Endothelial cell of umbilical vein (primary cell): ENCODE measurements at regions of chr2 and their contacts with region 1.

Region 1: DNA sequence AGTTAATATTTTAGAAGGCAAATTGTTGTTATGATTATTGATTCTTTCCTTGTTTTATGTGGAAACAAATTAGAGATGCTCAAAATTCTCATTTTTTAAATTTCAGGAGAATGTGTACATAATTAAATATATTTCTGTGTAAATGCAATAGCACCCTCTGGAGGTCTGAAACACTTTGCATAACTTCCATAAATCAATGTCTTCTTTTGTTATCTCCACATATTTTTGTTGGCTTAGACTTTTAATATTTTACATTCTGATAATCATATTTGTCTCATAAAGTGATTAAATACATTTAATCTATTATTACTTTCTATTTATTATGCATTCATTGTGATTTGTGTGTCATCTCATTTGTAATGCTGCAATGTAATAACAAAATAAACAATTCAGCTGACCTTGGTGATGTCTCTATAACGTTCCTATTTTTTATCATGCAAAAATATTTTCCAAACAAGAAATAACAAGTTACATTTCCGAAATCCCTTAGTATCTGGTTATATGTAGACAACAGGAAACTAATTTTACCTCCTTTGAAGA is 201.8 kb upstream of the GALNT5 start:
- DNase-seq: peak; percentile 61
- H3K4me3 ChIP-seq: peak overlapping the region in 1 of 3 experiments; percentile 40
- H3K27ac ChIP-seq: peak overlapping the region; percentile 66
- H3K4me1 ChIP-seq: peaks cover 35% of the 10 kb centered on the region
- H3K27me3 ChIP-seq: peaks cover 0 to 1% of the 10 kb centered on the region in 2 experiments
- CTCF ChIP-seq: peak; percentile 26 to 29
- POLR2A ChIP-seq: no peak

Region 2: DNA sequence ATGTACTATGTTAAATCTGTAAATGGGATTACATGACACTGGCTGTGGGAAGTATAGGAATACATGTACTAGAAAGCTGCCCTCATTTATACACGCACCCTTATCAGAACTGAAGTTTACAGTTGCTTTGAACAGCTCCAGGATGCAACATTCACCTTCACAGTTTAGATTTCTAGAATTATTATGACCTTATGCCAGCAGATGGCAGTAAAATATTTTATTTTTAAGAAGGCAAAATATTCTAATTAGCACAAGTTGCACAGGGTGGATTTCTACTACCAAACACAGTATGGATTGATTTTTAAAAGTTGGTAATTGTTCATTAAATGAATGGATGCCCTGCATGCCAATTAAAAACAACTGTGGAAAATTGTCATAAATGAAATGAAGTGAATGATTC is 1686.8 kb before region 1 on chr2:
- CTCF ChIA-PET with region 1: interaction called, 11 read pairs
- POLR2A ChIA-PET with region 1: no interaction called
- dilution Hi-C with region 1: no loop called
- intact Hi-C with region 1: no loop called
- DNase-seq: peak; percentile 24
- H3K4me3 ChIP-seq: no peak overlapping the region
- H3K27ac ChIP-seq: no peak overlapping the region
- H3K4me1 ChIP-seq: no peaks in the 10 kb centered on the region
- H3K27me3 ChIP-seq: no peaks in the 10 kb centered on the region
- CTCF ChIP-seq: no peak
- POLR2A ChIP-seq: no peak

Region 3: DNA sequence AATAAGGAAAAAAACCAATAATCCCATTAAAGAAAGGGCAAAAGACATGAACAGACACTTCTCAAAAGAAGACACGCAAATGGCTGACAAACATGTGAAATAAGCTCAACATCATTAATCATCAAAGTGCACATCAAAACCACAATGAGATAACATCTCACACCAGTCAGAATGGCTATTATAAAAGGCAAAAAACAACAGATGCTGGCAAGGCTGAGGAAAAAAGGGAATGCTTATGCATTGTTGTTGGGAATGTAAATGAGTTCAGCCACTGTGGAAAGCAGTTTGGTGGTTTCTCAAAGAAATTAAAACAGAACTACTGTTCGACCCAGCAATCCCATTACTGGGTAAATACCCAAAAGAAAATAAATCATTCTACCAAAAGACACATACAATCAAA is 1008.8 kb before region 1 on chr2:
- CTCF ChIA-PET with region 1: no interaction called
- POLR2A ChIA-PET with region 1: no interaction called
- dilution Hi-C with region 1: no loop called
- intact Hi-C with region 1: no loop called
- DNase-seq: no peak
- H3K4me3 ChIP-seq: no peak overlapping the region
- H3K27ac ChIP-seq: no peak overlapping the region
- H3K4me1 ChIP-seq: no peaks in the 10 kb centered on the region
- H3K27me3 ChIP-seq: no peaks in the 10 kb centered on the region
- CTCF ChIP-seq: no peak
- POLR2A ChIP-seq: no peak

Region 4: GRCh38 chr2:156341452-156342253 is 714.1 kb before region 1 on chr2:
- CTCF ChIA-PET with region 1: no interaction called
- POLR2A ChIA-PET with region 1: no interaction called
- dilution Hi-C with region 1: no loop called
- intact Hi-C with region 1: loop called (anchors 1 kb)
- DNase-seq: peak; percentile 83
- H3K4me3 ChIP-seq: peak overlapping the region; percentile 69 to 97 (median 87)
- H3K27ac ChIP-seq: peak overlapping the region; percentile 100
- H3K4me1 ChIP-seq: peaks cover 11% of the 10 kb centered on the region
- H3K27me3 ChIP-seq: no peaks in the 10 kb centered on the region
- CTCF ChIP-seq: no peak
- POLR2A ChIP-seq: peak; percentile 35

Region 5: GRCh38 chr2:156589381-156590079 is 466.2 kb before region 1 on chr2:
- CTCF ChIA-PET with region 1: interaction called, 10 read pairs
- POLR2A ChIA-PET with region 1: no interaction called
- dilution Hi-C with region 1: no loop called
- intact Hi-C with region 1: loop called (anchors 2 kb)
- DNase-seq: peak; percentile 60
- H3K4me3 ChIP-seq: no peak overlapping the region
- H3K27ac ChIP-seq: no peak overlapping the region
- H3K4me1 ChIP-seq: no peaks in the 10 kb centered on the region
- H3K27me3 ChIP-seq: no peaks in the 10 kb centered on the region
- CTCF ChIP-seq: peak; percentile 19 to 40
- POLR2A ChIP-seq: no peak

Region 6: DNA sequence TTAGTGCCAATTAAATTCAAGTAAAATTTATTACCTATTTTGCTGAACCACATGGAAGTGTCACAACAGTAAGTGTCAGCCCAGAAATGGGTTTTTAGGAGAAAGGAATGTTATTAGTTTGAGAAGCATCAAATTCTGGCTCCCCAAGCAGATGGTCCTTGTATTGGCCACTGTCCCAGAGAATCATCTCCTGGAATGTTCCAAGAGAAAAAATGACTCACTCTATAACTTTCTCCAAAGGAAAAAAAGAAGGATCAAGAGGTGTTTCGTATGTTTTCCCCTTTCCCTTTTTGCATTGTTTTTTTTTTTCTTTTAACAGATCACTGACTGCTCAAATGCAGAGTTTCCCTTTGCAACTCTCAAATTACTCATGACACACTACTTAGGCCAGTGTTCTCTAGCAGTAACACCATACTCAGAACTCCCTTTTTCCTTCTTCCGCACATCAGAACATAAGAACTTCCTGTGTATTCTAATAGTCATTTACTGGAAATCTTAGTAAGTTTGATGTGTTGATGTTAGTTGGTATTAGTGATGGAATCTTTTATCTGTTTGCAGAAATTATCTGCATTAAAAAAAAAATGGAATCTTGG is 229.3 kb before region 1 on chr2:
- CTCF ChIA-PET with region 1: no interaction called
- POLR2A ChIA-PET with region 1: no interaction called
- dilution Hi-C with region 1: no loop called
- intact Hi-C with region 1: no loop called
- DNase-seq: no peak
- H3K4me3 ChIP-seq: no peak overlapping the region
- H3K27ac ChIP-seq: no peak overlapping the region
- H3K4me1 ChIP-seq: no peaks in the 10 kb centered on the region
- H3K27me3 ChIP-seq: no peaks in the 10 kb centered on the region
- CTCF ChIP-seq: no peak
- POLR2A ChIP-seq: no peak

Region 7: DNA sequence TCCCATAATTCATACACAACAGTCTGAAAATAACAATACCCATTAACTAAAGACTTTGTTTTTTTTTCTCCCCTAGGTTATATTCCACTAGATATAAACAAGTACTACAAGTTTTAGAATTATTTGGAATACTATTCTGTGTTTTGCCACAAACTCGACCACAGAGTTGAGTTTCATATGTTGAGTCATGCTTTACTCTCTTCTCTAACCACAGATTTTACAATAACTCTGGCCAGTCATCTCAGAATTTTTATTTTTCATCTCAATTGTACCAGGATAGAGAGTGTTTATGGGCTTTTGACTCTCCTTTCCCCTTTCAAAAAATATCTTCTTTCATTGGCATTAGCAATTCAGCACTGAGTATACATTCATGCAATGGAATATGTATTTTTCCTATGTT is 146.9 kb before region 1 on chr2:
- CTCF ChIA-PET with region 1: no interaction called
- POLR2A ChIA-PET with region 1: no interaction called
- dilution Hi-C with region 1: no loop called
- intact Hi-C with region 1: loop called (anchors 5 kb)
- DNase-seq: no peak
- H3K4me3 ChIP-seq: no peak overlapping the region
- H3K27ac ChIP-seq: no peak overlapping the region
- H3K4me1 ChIP-seq: peaks cover 5% of the 10 kb centered on the region
- H3K27me3 ChIP-seq: no peaks in the 10 kb centered on the region
- CTCF ChIP-seq: no peak
- POLR2A ChIP-seq: no peak

Region 8: DNA sequence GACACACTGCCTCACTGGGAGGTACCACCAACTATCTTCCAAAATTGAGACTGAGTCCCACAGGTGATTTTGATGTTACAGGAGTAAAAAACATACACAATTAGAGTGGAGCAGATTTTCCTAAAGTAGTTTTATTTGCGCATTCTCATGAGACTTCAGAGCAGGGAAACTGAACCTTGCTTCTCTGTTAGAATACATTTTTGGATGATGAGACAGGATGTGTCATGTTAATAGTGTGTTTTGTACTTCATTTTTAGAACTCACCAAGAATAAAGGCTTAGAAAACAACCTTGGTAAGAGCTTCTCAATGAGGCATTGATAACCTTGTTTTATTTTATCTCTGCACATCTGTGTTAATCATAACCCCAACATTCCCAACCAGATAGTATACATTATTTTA is 108.5 kb before region 1 on chr2:
- CTCF ChIA-PET with region 1: no interaction called
- POLR2A ChIA-PET with region 1: no interaction called
- dilution Hi-C with region 1: no loop called
- intact Hi-C with region 1: no loop called
- DNase-seq: no peak
- H3K4me3 ChIP-seq: no peak overlapping the region
- H3K27ac ChIP-seq: no peak overlapping the region
- H3K4me1 ChIP-seq: no peaks in the 10 kb centered on the region
- H3K27me3 ChIP-seq: no peaks in the 10 kb centered on the region
- CTCF ChIP-seq: no peak
- POLR2A ChIP-seq: no peak

Region 9: GRCh38 chr2:157173740-157174184 is 118.0 kb after region 1 on chr2:
- CTCF ChIA-PET with region 1: interaction called, 8 read pairs
- POLR2A ChIA-PET with region 1: no interaction called
- dilution Hi-C with region 1: no loop called
- intact Hi-C with region 1: loop called (anchors 2 kb)
- DNase-seq: peak; percentile 93
- H3K4me3 ChIP-seq: no peak overlapping the region
- H3K27ac ChIP-seq: peak overlapping the region; percentile 78
- H3K4me1 ChIP-seq: peaks cover 18% of the 10 kb centered on the region
- H3K27me3 ChIP-seq: no peaks in the 10 kb centered on the region
- CTCF ChIP-seq: no peak
- POLR2A ChIP-seq: no peak

Region 10: GRCh38 chr2:157194097-157194688 is 138.5 kb after region 1 on chr2:
- CTCF ChIA-PET with region 1: interaction called, 41 read pairs
- POLR2A ChIA-PET with region 1: no interaction called
- dilution Hi-C with region 1: no loop called
- intact Hi-C with region 1: loop called (anchors 1 kb)
- DNase-seq: peak; percentile 78
- H3K4me3 ChIP-seq: no peak overlapping the region
- H3K27ac ChIP-seq: peak overlapping the region; percentile 21
- H3K4me1 ChIP-seq: peaks cover 18% of the 10 kb centered on the region
- H3K27me3 ChIP-seq: no peaks in the 10 kb centered on the region
- CTCF ChIP-seq: peak; percentile 45 to 59
- POLR2A ChIP-seq: no peak